SK-N-SH (cell line): ENCODE measurements at regions of chr14 and their contacts with region 1.

Region 1: DNA sequence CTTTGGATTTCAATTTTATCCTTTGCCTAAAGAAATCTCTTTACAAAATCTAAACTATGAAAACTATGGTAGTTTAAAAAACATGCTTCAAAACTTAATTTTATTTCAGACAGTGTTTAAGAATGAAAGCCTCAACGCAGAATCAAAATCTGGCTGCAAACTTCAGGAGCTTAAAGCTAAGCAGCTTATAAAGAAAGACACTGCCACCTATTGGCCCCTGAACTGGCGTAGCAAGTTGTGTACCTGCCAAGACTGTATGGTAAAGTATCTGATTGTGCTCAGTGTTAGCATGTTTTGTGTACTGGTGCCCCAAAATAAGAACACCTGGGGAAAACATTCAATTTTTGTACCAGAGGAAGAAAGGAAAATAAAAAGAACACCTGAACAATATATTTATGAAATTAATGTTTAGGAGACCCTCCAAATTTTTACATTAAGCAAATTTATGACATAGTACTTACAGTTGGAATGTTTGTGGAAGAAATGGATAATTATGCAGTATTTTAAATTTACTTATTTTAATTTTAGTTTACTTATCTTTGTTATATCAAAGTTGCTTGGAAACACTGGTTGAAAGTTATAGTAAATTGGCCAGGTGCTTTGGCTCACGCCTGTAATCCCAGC is 12.2 kb downstream of the UBR7 start:
- DNase-seq: peak; percentile 55
- H3K4me3 ChIP-seq: no peak overlapping the region
- H3K27ac ChIP-seq: no peak overlapping the region
- H3K4me1 ChIP-seq: no peaks in the 10 kb centered on the region
- H3K27me3 ChIP-seq: no peaks in the 10 kb centered on the region
- CTCF ChIP-seq: peak; percentile 74
- EP300 ChIP-seq: no peak
- RAD21 ChIP-seq: peak; percentile 76

Region 2: GRCh38 chr14:93231129-93231979 is 12.1 kb after region 1 on chr14:
- CTCF ChIA-PET with region 1: interaction called, 12 read pairs
- POLR2A ChIA-PET with region 1: no interaction called
- DNase-seq: peak; percentile 95
- H3K4me3 ChIP-seq: peak overlapping the region; percentile 57 to 72
- H3K27ac ChIP-seq: peak overlapping the region; percentile 49 to 79
- H3K4me1 ChIP-seq: peaks cover 0 to 12% of the 10 kb centered on the region in 2 experiments; a peak in 1 of 4 replicates
- H3K27me3 ChIP-seq: no peaks in the 10 kb centered on the region
- CTCF ChIP-seq: no peak
- EP300 ChIP-seq: no peak
- RAD21 ChIP-seq: no peak